ENCODE measurements at regions of chr14 and their contacts with region 1.

Region 1: GRCh38 chr14:29548948-29549370 is 378.7 kb downstream of the PRKD1 start:
- DNase-seq: peak; percentile 70
- ATAC-seq: peak; percentile 95
- H3K4me3 ChIP-seq: no peak overlapping the region
- H3K27ac ChIP-seq: no peak overlapping the region
- H3K4me1 ChIP-seq: no peaks in the 10 kb centered on the region
- H3K27me3 ChIP-seq: no peaks in the 10 kb centered on the region
- CTCF ChIP-seq: peak; percentile 75
- EP300 ChIP-seq: no peak
- POLR2A ChIP-seq: no peak
- RAD21 ChIP-seq: no peak

Region 2: DNA sequence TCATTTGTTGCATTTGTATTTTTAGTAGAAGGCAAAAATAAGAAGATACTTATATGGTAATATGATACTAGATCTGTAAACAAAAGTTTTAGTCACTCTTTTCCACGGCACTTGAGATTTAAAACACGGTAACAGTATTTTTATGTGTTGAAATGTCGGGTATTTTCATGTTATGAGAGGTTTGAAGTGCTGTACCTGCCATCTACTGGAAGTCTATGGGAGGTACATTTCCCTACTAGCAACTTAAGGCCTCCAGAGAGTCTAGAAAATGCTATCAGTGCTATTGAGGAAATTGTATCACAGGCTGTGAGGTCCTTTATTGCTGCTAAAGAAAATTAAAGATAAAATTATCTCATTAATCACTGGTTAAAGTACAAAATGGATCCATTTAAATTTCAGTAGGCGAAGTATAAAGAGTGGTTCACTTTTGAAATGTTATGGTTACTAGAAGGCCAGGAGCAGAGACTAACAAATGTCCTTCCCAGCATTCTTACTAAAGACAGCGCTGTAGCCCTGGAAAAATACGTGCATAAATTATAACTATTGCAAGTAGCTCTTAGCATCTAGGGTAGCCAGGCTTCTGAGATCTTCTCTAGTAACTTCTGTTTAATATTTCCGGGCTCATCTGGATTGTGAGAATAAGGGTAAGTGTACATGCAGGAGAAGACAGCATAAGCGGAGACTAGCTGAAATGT is 456.3 kb after region 1 on chr14:
- CTCF ChIA-PET with region 1: interaction called, 54 read pairs
- POLR2A ChIA-PET with region 1: no interaction called
- in situ Hi-C with region 1: loop called (anchors 10 kb)
- intact Hi-C with region 1: loop called (anchors 1 kb)
- DNase-seq: peak; percentile 62
- ATAC-seq: peak; percentile 98
- H3K4me3 ChIP-seq: no peak overlapping the region
- H3K27ac ChIP-seq: no peak overlapping the region
- H3K4me1 ChIP-seq: no peaks in the 10 kb centered on the region
- H3K27me3 ChIP-seq: no peaks in the 10 kb centered on the region
- CTCF ChIP-seq: peak; percentile 78
- EP300 ChIP-seq: no peak
- POLR2A ChIP-seq: no peak
- RAD21 ChIP-seq: no peak; the same call in 1 of the 2 replicates

Region 3: DNA sequence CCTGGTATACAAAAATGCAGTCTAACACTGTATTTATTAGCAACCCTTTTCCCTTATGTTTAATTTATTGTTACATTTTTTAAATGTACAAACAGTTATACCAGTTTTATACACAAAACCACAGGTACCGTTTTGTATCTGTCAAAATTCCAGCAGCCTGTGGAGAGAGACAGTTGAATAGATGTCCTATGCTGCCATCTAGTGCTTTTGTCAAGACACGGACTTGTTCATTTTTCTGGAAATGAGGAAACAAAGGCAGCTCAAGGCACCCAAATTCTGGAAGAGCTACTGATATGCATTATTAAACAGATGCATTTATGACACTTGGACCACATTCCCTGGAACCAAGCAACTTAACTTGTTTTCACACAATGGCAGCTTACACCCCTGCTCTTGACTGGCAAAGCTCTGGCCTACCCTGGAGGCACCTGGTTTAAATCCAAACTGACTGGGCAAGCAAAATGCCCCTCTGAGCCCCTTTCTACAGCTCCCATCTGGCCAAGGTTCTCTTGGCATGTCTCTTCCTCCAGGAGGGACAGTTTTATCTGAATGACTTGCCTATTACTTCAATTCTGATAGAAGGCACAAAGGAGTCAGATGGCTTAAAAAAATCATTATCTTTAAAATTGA is 665.6 kb after region 1 on chr14:
- CTCF ChIA-PET with region 1: interaction called, 29 read pairs
- POLR2A ChIA-PET with region 1: no interaction called
- in situ Hi-C with region 1: loop called (anchors 5 kb)
- intact Hi-C with region 1: loop called (anchors 1 kb)
- DNase-seq: peak; percentile 75
- ATAC-seq: peak; percentile 91
- H3K4me3 ChIP-seq: no peak overlapping the region
- H3K27ac ChIP-seq: no peak overlapping the region
- H3K4me1 ChIP-seq: no peaks in the 10 kb centered on the region
- H3K27me3 ChIP-seq: no peaks in the 10 kb centered on the region
- CTCF ChIP-seq: peak; percentile 87
- EP300 ChIP-seq: no peak
- POLR2A ChIP-seq: no peak
- RAD21 ChIP-seq: peak; percentile 79

Region 4: GRCh38 chr14:30270200-30271161 is 721.5 kb after region 1 on chr14:
- CTCF ChIA-PET with region 1: no interaction called
- POLR2A ChIA-PET with region 1: no interaction called
- in situ Hi-C with region 1: no loop called
- intact Hi-C with region 1: loop called (anchors 2 kb)
- DNase-seq: peak; percentile 85
- ATAC-seq: peak; percentile 100
- H3K4me3 ChIP-seq: no peak overlapping the region
- H3K27ac ChIP-seq: no peak overlapping the region
- H3K4me1 ChIP-seq: no peaks in the 10 kb centered on the region
- H3K27me3 ChIP-seq: peaks cover 0 to 4% of the 10 kb centered on the region in 2 experiments; a peak in 1 of 5 replicates
- CTCF ChIP-seq: peak; percentile 99
- EP300 ChIP-seq: no peak
- POLR2A ChIP-seq: no peak
- RAD21 ChIP-seq: peak; percentile 80; the same call in 1 of the 2 replicates

Measured in HepG2 (cell line).